ENCODE measurements at regions of chr6 and their contacts with region 1.

Region 1: GRCh38 chr6:3977875-3978711 is 100.8 kb downstream of the FAM217A start:
- DNase-seq: peak; percentile 58
- H3K4me3 ChIP-seq: no peak overlapping the region
- H3K27me3 ChIP-seq: no peaks in the 10 kb centered on the region
- CTCF ChIP-seq: peak; percentile 75

Region 2: DNA sequence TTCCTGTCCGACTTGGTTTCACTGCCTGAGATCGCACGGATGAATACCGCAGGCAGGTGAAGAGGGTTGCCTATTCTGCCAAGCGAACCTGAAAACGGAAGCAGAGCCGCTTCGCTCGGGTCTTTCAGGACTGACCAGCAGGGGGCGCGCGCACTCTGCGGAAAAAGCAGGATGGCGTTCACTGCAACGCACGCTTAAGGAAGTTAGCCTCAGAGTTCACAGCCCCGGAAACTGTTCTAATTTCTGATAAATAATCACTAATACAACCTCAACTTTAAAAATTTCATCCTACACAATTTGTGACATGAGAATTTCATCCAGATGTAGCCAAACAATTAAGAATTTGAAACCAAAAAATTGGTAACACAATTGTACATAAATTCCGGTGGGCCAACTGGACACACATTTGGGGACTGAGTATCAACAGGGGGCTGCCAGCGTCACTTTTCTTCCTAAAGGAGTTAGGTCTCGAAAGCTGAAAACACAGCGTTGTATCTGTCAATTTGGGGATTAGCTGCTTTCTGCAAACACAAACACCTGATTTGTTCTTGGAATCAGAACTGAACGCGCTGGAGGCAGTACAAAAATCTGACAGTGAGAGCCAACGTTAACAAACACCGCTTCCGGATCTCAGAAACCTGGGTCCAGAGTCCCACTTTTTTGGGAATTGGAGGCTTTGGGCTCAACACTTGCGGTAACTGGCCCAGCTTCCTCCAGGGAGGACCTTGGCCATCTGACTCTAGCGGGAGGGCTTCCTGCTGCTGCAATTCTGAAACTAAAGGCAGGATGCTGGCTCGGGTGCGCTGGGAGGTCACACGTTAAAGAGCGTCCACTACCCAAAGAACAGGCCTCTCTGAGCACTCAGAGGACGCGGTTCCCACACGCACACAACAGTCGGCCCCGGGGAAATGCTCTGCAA is 235.4 kb before region 1 on chr6:
- CTCF ChIA-PET with region 1: interaction called, 48 read pairs
- POLR2A ChIA-PET with region 1: no interaction called
- DNase-seq: no peak
- H3K4me3 ChIP-seq: no peak overlapping the region
- H3K27me3 ChIP-seq: no peaks in the 10 kb centered on the region
- CTCF ChIP-seq: peak; percentile 90

Region 3: DNA sequence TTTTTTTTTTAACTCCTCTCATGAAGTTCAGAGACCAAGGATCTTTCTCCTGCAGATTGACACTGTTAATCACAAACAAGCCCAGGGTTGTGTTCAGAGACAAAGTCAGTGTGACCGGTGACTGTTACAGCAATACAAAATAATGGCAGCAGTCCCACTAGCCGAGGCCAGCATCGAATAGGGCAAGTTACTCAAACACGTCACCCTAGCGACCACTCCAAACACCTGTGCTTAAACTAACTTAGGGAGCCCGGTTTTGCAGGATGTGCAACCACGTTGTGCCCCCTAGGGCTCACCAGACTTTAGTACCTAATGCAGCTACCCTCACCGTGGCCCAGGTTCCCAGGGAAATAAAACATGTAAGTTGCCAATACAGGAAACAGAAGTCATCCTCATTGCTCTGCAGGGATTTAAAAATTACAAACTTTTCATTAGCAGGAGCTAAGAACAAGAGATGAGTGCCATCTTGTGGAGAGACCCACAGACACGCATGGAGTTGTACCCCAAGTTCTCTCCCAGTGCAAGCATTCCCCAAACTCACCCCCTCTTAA is 90.9 kb before region 1 on chr6:
- CTCF ChIA-PET with region 1: interaction called, 22 read pairs
- POLR2A ChIA-PET with region 1: no interaction called
- DNase-seq: no peak
- H3K4me3 ChIP-seq: no peak overlapping the region
- H3K27me3 ChIP-seq: no peaks in the 10 kb centered on the region
- CTCF ChIP-seq: peak; percentile 63

Region 4: DNA sequence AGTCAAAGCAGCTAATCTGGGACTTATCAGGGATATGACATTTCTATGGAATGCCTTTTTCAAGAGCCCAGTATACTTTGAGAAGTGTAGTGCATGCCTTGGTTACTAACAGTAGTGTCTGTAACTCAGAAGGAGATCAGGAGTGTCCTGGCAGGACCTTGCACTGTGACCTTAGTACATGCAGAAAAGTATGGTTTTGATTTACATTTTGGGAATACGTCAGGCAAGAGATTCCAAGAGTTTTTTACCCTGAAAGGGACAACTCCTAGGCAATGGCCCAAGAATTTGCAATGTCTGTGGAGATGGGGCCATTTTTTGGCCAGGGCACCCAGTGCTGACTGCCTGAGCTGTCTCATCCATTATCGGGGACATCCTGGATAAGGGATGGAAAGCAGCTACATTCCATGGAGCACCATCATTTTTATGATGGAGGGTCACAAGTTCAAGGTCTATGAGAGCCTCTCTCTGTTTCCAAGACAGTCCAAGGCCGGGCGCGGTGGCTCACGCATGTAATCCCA is 48.8 kb before region 1 on chr6:
- CTCF ChIA-PET with region 1: interaction called, 12 read pairs
- POLR2A ChIA-PET with region 1: no interaction called
- DNase-seq: peak; percentile 97
- H3K4me3 ChIP-seq: no peak overlapping the region
- H3K27me3 ChIP-seq: no peaks in the 10 kb centered on the region
- CTCF ChIP-seq: no peak

Region 5: GRCh38 chr6:3990692-3991501 is 12.8 kb after region 1 on chr6:
- CTCF ChIA-PET with region 1: interaction called, 22 read pairs
- POLR2A ChIA-PET with region 1: no interaction called
- DNase-seq: peak; percentile 27
- H3K4me3 ChIP-seq: peak overlapping the region; percentile 9; the same call in 1 of the 2 replicates
- H3K27me3 ChIP-seq: no peaks in the 10 kb centered on the region
- CTCF ChIP-seq: peak; percentile 95

Region 6: GRCh38 chr6:4018172-4018905 is 40.2 kb after region 1 on chr6:
- CTCF ChIA-PET with region 1: interaction called, 6 read pairs
- POLR2A ChIA-PET with region 1: interaction called, 21 read pairs
- DNase-seq: peak; percentile 68
- H3K4me3 ChIP-seq: peak overlapping the region; percentile 63
- H3K27me3 ChIP-seq: no peaks in the 10 kb centered on the region
- CTCF ChIP-seq: peak; percentile 59

Region 7: DNA sequence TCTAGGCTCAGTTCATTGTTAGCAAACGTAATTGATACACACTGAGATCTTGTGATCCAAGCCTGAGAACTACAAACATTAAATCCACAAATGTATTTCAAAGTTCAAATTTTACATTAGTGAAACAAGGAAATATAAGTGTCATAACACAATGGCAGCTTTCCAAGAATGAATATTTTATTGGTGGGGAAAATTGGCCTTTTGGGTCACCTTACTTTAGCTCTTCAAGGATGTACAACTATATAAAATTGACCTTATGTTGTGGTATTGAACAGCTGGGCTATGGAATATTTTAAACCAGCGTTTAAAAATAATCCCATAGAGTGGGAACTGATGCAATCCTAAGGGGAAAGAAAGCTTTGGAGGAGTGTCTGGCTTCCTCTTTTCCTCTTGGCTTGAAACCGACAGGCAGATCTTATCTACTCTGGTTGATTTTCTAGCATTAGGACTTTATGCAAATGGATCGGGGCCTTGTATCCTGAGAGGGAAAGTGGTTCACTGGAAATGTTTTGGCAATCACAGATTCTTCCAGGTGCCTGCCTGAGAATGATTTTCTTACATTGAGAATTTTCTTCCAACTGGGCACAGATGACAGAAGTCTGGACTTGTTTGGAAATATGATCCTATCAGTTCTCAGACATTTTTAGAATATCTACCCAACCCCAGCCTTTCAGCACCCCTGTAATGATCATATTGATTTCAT is 342.0 kb after region 1 on chr6:
- CTCF ChIA-PET with region 1: no interaction called
- POLR2A ChIA-PET with region 1: no interaction called
- DNase-seq: no peak
- H3K4me3 ChIP-seq: no peak overlapping the region
- H3K27me3 ChIP-seq: no peaks in the 10 kb centered on the region
- CTCF ChIP-seq: no peak